ENCODE measurements at regions of chrX and their contacts with region 1.

Region 1: DNA sequence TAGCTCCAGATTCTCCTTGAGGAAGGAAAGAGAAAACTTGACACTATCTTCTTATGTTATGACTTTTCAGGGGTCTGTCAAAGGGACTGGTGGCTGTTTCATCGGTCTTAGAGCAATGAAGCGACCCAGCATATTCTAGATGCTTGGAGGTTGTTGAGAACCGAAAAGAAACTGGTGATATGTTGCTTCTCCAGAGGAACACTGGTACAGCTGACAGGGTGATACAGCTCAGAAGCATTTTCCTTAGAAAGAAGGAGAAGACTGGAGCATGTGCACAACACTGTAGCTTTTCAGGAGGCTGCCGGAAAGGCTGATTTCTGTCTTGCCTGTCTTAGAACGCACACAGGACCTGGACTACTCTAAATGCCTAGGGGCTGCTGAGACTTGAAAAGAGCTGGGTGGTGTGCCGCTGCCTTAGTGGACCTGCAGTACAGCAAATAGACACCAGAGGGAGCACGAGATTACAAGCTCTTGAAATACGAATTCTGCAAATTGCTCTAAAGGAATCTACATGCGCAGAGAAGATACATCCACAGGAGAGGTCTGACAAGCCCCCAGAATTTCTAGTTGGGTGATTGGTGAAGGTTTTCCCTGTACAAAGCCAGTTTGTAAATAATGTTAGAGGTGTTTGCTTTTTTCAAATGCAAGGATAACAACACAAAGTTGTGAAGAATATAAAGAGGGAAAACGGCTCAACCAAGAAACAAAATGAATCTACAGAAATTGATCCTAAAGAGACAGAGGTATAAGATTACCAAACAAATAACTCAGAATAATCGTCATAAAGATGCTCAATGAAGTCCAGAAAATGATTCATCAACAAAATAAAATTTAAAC is 223.1 kb upstream of the DMD start:
- DNase-seq: peak; percentile 37
- ATAC-seq: peak; percentile 87
- H3K4me3 ChIP-seq: no peak overlapping the region
- H3K27ac ChIP-seq: no peak overlapping the region
- H3K4me1 ChIP-seq: no peaks in the 10 kb centered on the region
- H3K27me3 ChIP-seq: no peaks in the 10 kb centered on the region
- CTCF ChIP-seq: peak; percentile 57
- POLR2A ChIP-seq: no peak
- RAD21 ChIP-seq: peak; percentile 38

Region 2: DNA sequence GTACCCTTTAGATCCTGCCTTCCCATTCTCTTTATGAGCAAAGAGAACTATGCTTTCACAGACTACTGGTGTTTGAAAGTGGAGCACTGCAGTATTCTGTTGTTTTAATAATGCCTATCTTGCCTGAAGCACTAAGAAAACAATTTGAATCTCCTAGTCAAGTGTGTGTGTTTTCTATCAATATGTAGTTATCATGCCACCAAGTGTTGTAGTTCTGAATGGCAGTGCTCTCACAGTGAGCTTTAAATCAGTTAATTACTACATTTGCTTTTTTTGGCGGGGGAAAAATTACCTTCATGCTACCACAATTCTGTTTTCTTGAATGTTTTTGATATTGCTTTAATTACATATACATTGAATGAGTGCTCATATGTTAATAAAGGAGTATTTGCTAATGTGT is 841.2 kb after region 1 on chrX:
- CTCF ChIA-PET with region 1: no interaction called
- POLR2A ChIA-PET with region 1: no interaction called
- dilution Hi-C with region 1: no loop called
- in situ Hi-C with region 1: loop called (anchors 25 kb)
- intact Hi-C with region 1: no loop called
- DNase-seq: no peak
- ATAC-seq: no peak
- H3K4me3 ChIP-seq: no peak overlapping the region
- H3K27ac ChIP-seq: no peak overlapping the region
- H3K4me1 ChIP-seq: no peaks in the 10 kb centered on the region
- H3K27me3 ChIP-seq: no peaks in the 10 kb centered on the region
- CTCF ChIP-seq: no peak
- POLR2A ChIP-seq: no peak
- RAD21 ChIP-seq: no peak

Region 3: DNA sequence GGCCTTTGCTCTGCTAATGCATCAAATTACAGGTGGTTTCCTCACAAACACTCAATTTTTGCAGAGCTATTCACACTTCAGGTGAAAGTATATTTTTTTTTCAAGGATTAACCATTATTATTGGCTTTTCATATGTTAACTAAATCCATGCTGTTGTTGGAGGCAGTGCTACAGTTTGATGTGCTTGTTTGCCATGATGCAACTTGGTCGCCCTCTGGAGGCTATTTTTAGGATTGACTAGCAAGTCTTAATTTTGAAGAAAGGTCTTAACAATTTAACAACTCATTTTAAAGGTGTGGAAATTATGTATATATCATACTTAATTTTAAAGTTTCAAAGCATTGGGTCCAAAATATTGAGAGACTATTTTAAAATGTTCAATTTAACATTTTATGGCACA is 866.4 kb after region 1 on chrX:
- CTCF ChIA-PET with region 1: no interaction called
- POLR2A ChIA-PET with region 1: no interaction called
- dilution Hi-C with region 1: no loop called
- in situ Hi-C with region 1: loop called (anchors 25 kb)
- intact Hi-C with region 1: loop called (anchors 1 kb)
- DNase-seq: peak; percentile 58
- ATAC-seq: peak; percentile 46; the same call in 1 of the 2 replicates
- H3K4me3 ChIP-seq: no peak overlapping the region
- H3K27ac ChIP-seq: no peak overlapping the region
- H3K4me1 ChIP-seq: no peaks in the 10 kb centered on the region
- H3K27me3 ChIP-seq: no peaks in the 10 kb centered on the region
- CTCF ChIP-seq: peak; percentile 58
- POLR2A ChIP-seq: no peak
- RAD21 ChIP-seq: peak; percentile 61